Naive thymus-derived CD4-positive, alpha-beta T cell (primary cell): ENCODE measurements at regions of chr9 and their contacts with region 1.

Region 1: GRCh38 chr9:112020680-112021596 is 124.3 kb downstream of the UGCG start:
- DNase-seq: no peak
- ATAC-seq: no peak
- H3K4me3 ChIP-seq: no peak overlapping the region
- H3K4me3 Mint-ChIP-seq: peak overlapping the region in 1 of 10 donors; percentile 7
- H3K27ac ChIP-seq: no peak overlapping the region
- H3K27ac Mint-ChIP-seq: no peak overlapping the region
- H3K4me1 ChIP-seq: no peaks in the 10 kb centered on the region
- H3K4me1 Mint-ChIP-seq: peaks cover 0 to 12% (median 4%) of the 10 kb centered on the region in 7 donors
- H3K27me3 ChIP-seq: no peaks in the 10 kb centered on the region
- H3K27me3 Mint-ChIP-seq: peaks cover 0 to 38% (median 5%) of the 10 kb centered on the region in 5 donors

Region 2: DNA sequence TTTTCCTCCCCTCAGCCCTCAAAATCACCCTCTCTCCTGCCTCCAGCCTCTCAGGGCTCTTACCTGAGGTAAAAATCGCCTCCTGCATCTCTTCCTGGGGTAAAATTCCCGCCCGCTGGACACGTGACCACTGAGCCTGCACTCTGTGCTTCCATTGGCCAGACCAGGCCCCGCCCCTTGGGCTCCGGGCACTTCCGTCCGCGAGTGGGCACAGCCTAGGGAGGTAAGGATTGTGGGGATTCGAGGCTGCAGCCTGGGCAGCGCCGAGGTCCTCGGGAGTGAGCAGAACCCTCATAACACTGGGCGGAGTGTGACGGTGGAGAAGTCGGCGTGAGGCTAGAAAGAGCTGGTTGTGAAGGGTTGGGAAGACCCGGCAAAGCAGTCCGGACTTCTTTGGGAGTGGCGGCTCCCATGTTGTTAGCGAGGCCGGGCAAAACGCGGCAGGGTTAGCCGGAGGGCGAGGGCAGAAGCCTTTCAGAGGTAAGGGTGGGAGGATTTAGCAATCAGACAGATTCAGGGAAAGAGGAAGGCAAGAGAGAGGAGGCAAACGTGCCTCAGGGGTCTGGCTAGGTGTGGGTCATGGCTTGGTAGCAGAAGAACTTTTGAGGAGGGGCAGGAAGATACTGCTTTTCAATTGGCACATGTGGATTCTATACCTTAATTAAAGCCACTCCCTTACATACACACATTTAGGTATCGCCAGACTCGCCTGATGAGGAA is 225.9 kb before region 1 on chr9 and contains the start of gene SHOC1:
- CTCF ChIA-PET with region 1: no interaction called
- POLR2A ChIA-PET with region 1: no interaction called
- intact Hi-C with region 1: no loop called
- DNase-seq: no peak
- ATAC-seq: no peak
- H3K4me3 ChIP-seq: no peak within 1 kb of the TSS
- H3K4me3 Mint-ChIP-seq: no peak within 1 kb of the TSS
- H3K27ac ChIP-seq: no peak within 1 kb of the TSS
- H3K27ac Mint-ChIP-seq: peak within 1 kb of the TSS in 1 of 9 donors; percentile 83
- H3K4me1 ChIP-seq: no peaks in the 10 kb centered on the region
- H3K4me1 Mint-ChIP-seq: no peaks in the 10 kb centered on the region
- H3K27me3 ChIP-seq: no peaks in the 10 kb centered on the region
- H3K27me3 Mint-ChIP-seq: no peaks in the 10 kb centered on the region
- total RNA-seq, gene SHOC1: not detected

Region 3: DNA sequence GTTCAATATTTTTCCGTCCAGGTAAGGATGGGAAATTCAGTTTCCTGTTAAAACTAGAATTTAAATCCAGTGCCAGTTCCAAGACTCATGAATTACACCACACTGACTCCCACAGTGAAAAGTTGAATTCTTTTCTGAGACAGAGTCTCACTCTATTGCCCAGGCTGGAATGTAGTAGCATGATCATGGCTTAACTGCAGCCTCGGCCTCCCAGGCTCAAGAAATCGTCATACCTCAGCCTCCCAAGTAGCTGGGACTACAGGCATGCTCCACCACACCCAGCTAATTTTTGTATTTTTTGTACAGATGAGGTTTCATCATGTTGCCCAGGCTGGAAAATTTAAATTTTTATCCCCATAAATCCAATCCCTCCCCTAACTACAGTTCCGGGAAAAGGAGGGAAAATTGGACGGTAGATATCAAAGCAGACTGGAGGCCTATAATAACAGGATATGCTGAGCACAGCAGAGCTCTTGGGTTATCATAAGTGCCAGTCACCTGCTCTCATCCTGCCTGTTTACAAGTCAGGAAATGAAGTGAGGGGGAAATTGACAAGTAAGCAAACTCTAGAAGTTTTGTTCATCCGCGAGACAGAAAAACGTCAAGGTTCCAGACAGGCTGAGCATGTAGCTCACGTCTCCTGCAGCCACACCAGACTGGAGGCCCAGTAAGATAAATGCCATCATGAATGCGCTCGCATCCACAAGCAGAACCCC is 18.6 kb before region 1 on chr9:
- CTCF ChIA-PET with region 1: no interaction called
- POLR2A ChIA-PET with region 1: interaction called, 7 read pairs
- intact Hi-C with region 1: loop called in 1 of 2 experiments (anchors 1 kb)
- DNase-seq: peak in 7 of 9 donors; percentile 39 to 75 (median 66)
- ATAC-seq: peak; percentile 77
- H3K4me3 ChIP-seq: peak overlapping the region; percentile 19
- H3K4me3 Mint-ChIP-seq: peak overlapping the region in 9 of 10 donors; percentile 1 to 80 (median 61)
- H3K27ac ChIP-seq: no peak overlapping the region
- H3K27ac Mint-ChIP-seq: peak overlapping the region; percentile 29 to 85 (median 78)
- H3K4me1 ChIP-seq: peaks cover 4 to 17% of the 10 kb centered on the region in 2 donors
- H3K4me1 Mint-ChIP-seq: peaks cover 17 to 56% (median 27%) of the 10 kb centered on the region in 7 donors
- H3K27me3 ChIP-seq: no peaks in the 10 kb centered on the region
- H3K27me3 Mint-ChIP-seq: peaks cover 0 to 30% (median 0%) of the 10 kb centered on the region in 5 donors

Region 4: GRCh38 chr9:112061152-112061740 is 40.3 kb after region 1 on chr9:
- CTCF ChIA-PET with region 1: no interaction called
- POLR2A ChIA-PET with region 1: no interaction called
- intact Hi-C with region 1: loop called in 1 of 2 experiments (anchors 5 kb)
- DNase-seq: peak in 3 of 9 donors; percentile 10 to 50 (median 10)
- ATAC-seq: peak; percentile 85
- H3K4me3 ChIP-seq: no peak overlapping the region
- H3K4me3 Mint-ChIP-seq: peak overlapping the region in 1 of 10 donors; percentile 43
- H3K27ac ChIP-seq: no peak overlapping the region
- H3K27ac Mint-ChIP-seq: peak overlapping the region in 3 of 9 donors; percentile 20 to 53 (median 33)
- H3K4me1 ChIP-seq: peaks cover 0 to 5% of the 10 kb centered on the region in 2 donors
- H3K4me1 Mint-ChIP-seq: peaks cover 9 to 32% (median 25%) of the 10 kb centered on the region in 7 donors
- H3K27me3 ChIP-seq: no peaks in the 10 kb centered on the region
- H3K27me3 Mint-ChIP-seq: no peaks in the 10 kb centered on the region

Region 5: GRCh38 chr9:112520656-112521055 is 499.7 kb after region 1 on chr9:
- CTCF ChIA-PET with region 1: no interaction called
- POLR2A ChIA-PET with region 1: no interaction called
- intact Hi-C with region 1: no loop called
- DNase-seq: no peak
- ATAC-seq: no peak
- H3K4me3 ChIP-seq: no peak overlapping the region
- H3K4me3 Mint-ChIP-seq: no peak overlapping the region
- H3K27ac ChIP-seq: no peak overlapping the region
- H3K27ac Mint-ChIP-seq: no peak overlapping the region
- H3K4me1 ChIP-seq: no peaks in the 10 kb centered on the region
- H3K4me1 Mint-ChIP-seq: peaks cover 0 to 17% (median 0%) of the 10 kb centered on the region in 7 donors
- H3K27me3 ChIP-seq: no peaks in the 10 kb centered on the region
- H3K27me3 Mint-ChIP-seq: no peaks in the 10 kb centered on the region